IMR-90 (cell line): ENCODE measurements at regions of chr20 and their contacts with region 1.

Region 1: GRCh38 chr20:62793912-62794724 is 2.2 kb upstream of the MRGBP start:
- DNase-seq: peak; percentile 95
- ATAC-seq: peak; percentile 88
- H3K4me3 ChIP-seq: peak overlapping the region; percentile 62
- H3K27ac ChIP-seq: peak overlapping the region; percentile 83
- H3K4me1 ChIP-seq: peaks cover 25% of the 10 kb centered on the region
- H3K27me3 ChIP-seq: no peaks in the 10 kb centered on the region
- CTCF ChIP-seq: no peak
- POLR2A ChIP-seq: peak; percentile 85
- RAD21 ChIP-seq: no peak

Region 2: GRCh38 chr20:62500237-62500864 is 293.8 kb before region 1 on chr20:
- CTCF ChIA-PET with region 1: interaction called, 5 read pairs
- POLR2A ChIA-PET with region 1: no interaction called
- dilution Hi-C with region 1: no loop called
- in situ Hi-C with region 1: no loop called
- intact Hi-C with region 1: loop called (anchors 5 kb)
- DNase-seq: peak; percentile 20
- ATAC-seq: peak; percentile 93
- H3K4me3 ChIP-seq: no peak overlapping the region
- H3K27ac ChIP-seq: no peak overlapping the region
- H3K4me1 ChIP-seq: no peaks in the 10 kb centered on the region
- H3K27me3 ChIP-seq: peaks cover 18% of the 10 kb centered on the region; the same call in 1 of the 2 replicates
- CTCF ChIP-seq: peak; percentile 72
- POLR2A ChIP-seq: no peak
- RAD21 ChIP-seq: peak; percentile 63

Region 3: GRCh38 chr20:62668441-62669027 is 125.6 kb before region 1 on chr20:
- CTCF ChIA-PET with region 1: interaction called, 4 read pairs
- POLR2A ChIA-PET with region 1: interaction called, 3 read pairs
- dilution Hi-C with region 1: no loop called
- in situ Hi-C with region 1: loop called (anchors 5 kb)
- intact Hi-C with region 1: loop called (anchors 1 kb)
- DNase-seq: peak; percentile 74
- ATAC-seq: peak; percentile 98
- H3K4me3 ChIP-seq: no peak overlapping the region
- H3K27ac ChIP-seq: no peak overlapping the region
- H3K4me1 ChIP-seq: no peaks in the 10 kb centered on the region
- H3K27me3 ChIP-seq: no peaks in the 10 kb centered on the region
- CTCF ChIP-seq: peak; percentile 99
- POLR2A ChIP-seq: peak; percentile 53; the same call in 1 of the 2 replicates
- RAD21 ChIP-seq: peak; percentile 99

Region 4: GRCh38 chr20:62704301-62704948 is 89.7 kb before region 1 on chr20:
- CTCF ChIA-PET with region 1: interaction called, 19 read pairs
- POLR2A ChIA-PET with region 1: no interaction called
- dilution Hi-C with region 1: no loop called
- in situ Hi-C with region 1: no loop called
- intact Hi-C with region 1: loop called (anchors 1 kb)
- DNase-seq: peak; percentile 95
- ATAC-seq: peak; percentile 75
- H3K4me3 ChIP-seq: no peak overlapping the region
- H3K27ac ChIP-seq: peak overlapping the region; percentile 76
- H3K4me1 ChIP-seq: peaks cover 15% of the 10 kb centered on the region
- H3K27me3 ChIP-seq: peaks cover 14% of the 10 kb centered on the region; the same call in 1 of the 2 replicates
- CTCF ChIP-seq: 0 out of 2 replicates have a peak, but pooled peaks have one; percentile 9
- POLR2A ChIP-seq: 0 out of 2 replicates have a peak, but pooled peaks have one; percentile 29
- RAD21 ChIP-seq: no peak

Region 5: GRCh38 chr20:62752671-62753501 is 41.2 kb before region 1 on chr20:
- CTCF ChIA-PET with region 1: interaction called, 5 read pairs
- POLR2A ChIA-PET with region 1: no interaction called
- dilution Hi-C with region 1: no loop called
- in situ Hi-C with region 1: no loop called
- intact Hi-C with region 1: loop called (anchors 2 kb)
- DNase-seq: peak; percentile 50
- ATAC-seq: peak; percentile 98
- H3K4me3 ChIP-seq: no peak overlapping the region
- H3K27ac ChIP-seq: peak overlapping the region; percentile 77
- H3K4me1 ChIP-seq: peaks cover 12% of the 10 kb centered on the region
- H3K27me3 ChIP-seq: no peaks in the 10 kb centered on the region; the same call in 1 of the 2 replicates
- CTCF ChIP-seq: no peak
- POLR2A ChIP-seq: no peak
- RAD21 ChIP-seq: no peak